ENCODE measurements at regions of chr6 and their contacts with region 1.

Region 1: GRCh38 chr6:42928986-42929820 is at the start of gene CNPY3:
- DNase-seq: peak; percentile 97
- ATAC-seq: peak; percentile 94
- H3K4me3 ChIP-seq: peak within 1 kb of the TSS; percentile 71 to 79 (median 78)
- H3K27ac ChIP-seq: peak within 1 kb of the TSS; percentile 83
- H3K4me1 ChIP-seq: peaks cover 64% of the 10 kb centered on the region
- H3K27me3 ChIP-seq: no peaks in the 10 kb centered on the region; a peak in 1 of 5 replicates
- CTCF ChIP-seq: peak; percentile 46
- EP300 ChIP-seq: peak in 1 of 2 experiments; percentile 8; a peak in 1 of 4 replicates
- POLR2A ChIP-seq: peak; percentile 70 to 74
- RAD21 ChIP-seq: peak; percentile 44
- total RNA-seq, gene CNPY3: 31.4 and 60.2 TPM in 2 replicates

Region 2: DNA sequence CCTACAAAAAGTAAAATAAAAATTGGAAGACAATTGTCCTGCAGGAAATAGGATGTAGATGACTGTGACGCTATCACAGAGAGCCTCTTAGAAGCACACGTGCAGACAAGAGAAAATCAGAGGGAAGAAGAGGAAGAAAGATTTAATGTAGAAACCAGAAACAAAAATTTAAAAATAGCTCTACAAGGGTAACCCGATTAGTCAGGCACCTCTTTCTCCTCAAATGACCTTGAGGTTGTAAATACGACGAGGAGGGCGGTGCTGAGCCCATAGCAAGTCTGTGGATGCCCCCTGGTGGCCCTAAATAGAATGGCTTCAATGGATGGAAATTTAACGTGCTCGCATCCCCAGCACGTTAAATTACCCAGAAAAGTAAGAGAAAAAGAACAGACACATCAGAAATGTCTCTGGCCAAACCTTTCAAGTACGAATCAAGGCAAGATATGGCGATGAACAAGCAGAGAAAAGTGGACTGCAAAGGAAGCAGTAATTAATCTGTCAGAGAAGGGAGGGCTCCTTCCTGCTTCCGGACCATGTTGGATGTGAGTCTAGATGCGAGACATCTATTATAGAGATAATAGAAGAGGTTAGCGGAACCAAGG is 202.6 kb before region 1 on chr6:
- CTCF ChIA-PET with region 1: no interaction called
- POLR2A ChIA-PET with region 1: no interaction called
- in situ Hi-C with region 1: no loop called
- intact Hi-C with region 1: no loop called
- DNase-seq: peak; percentile 84
- ATAC-seq: peak; percentile 82
- H3K4me3 ChIP-seq: no peak overlapping the region
- H3K27ac ChIP-seq: no peak overlapping the region
- H3K4me1 ChIP-seq: peaks cover 20% of the 10 kb centered on the region
- H3K27me3 ChIP-seq: no peaks in the 10 kb centered on the region
- CTCF ChIP-seq: peak; percentile 94
- EP300 ChIP-seq: no peak
- POLR2A ChIP-seq: no peak
- RAD21 ChIP-seq: peak; percentile 90; the same call in 1 of the 2 replicates

Region 3: DNA sequence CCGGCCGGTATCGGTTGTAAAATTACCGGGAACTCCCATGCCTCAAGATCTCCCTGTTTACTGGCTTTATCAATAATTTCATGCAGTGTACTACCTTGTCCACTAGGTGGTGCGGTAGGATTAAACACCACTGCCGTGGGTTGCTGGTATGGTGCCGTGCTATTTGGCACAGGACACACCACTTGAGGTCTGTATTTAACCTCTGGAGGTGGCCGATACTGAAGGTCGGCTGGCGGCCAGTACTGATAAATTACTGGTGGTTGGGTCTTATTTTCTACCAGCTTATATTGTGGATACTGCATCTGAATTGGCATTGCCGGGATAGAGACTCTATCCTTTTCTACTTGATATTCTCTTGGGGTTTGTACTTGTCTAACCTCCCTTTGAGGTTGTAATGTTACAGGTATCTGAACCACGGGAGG is 27.7 kb before region 1 on chr6:
- CTCF ChIA-PET with region 1: no interaction called
- POLR2A ChIA-PET with region 1: interaction called, 16 read pairs
- in situ Hi-C with region 1: no loop called
- intact Hi-C with region 1: no loop called
- DNase-seq: peak; percentile 92
- ATAC-seq: peak; percentile 94
- H3K4me3 ChIP-seq: peak overlapping the region; percentile 48 to 71 (median 63)
- H3K27ac ChIP-seq: no peak overlapping the region
- H3K4me1 ChIP-seq: peaks cover 38% of the 10 kb centered on the region
- H3K27me3 ChIP-seq: no peaks in the 10 kb centered on the region
- CTCF ChIP-seq: peak; percentile 98
- EP300 ChIP-seq: 0 out of 4 replicates have a peak, but pooled peaks of 1 of the 2 experiments have one; percentile 16
- POLR2A ChIP-seq: no peak
- RAD21 ChIP-seq: peak; percentile 96

Region 4: GRCh38 chr6:42963855-42964605 is 34.8 kb after region 1 on chr6:
- CTCF ChIA-PET with region 1: no interaction called
- POLR2A ChIA-PET with region 1: interaction called, 36 read pairs
- in situ Hi-C with region 1: no loop called
- intact Hi-C with region 1: no loop called
- DNase-seq: peak; percentile 76
- ATAC-seq: peak; percentile 44
- H3K4me3 ChIP-seq: no peak overlapping the region
- H3K27ac ChIP-seq: no peak overlapping the region
- H3K4me1 ChIP-seq: peaks cover 35% of the 10 kb centered on the region
- H3K27me3 ChIP-seq: no peaks in the 10 kb centered on the region; a peak in 1 of 5 replicates
- CTCF ChIP-seq: peak; percentile 72
- EP300 ChIP-seq: no peak
- POLR2A ChIP-seq: no peak
- RAD21 ChIP-seq: peak; percentile 62

Region 5: GRCh38 chr6:43013843-43014433 is 84.7 kb after region 1 on chr6 and contains the starts of genes KLHDC3 and MEA1:
- CTCF ChIA-PET with region 1: no interaction called
- POLR2A ChIA-PET with region 1: interaction called, 43 read pairs
- in situ Hi-C with region 1: no loop called
- intact Hi-C with region 1: no loop called
- DNase-seq: peak; percentile 100
- ATAC-seq: peak; percentile 94
- H3K4me3 ChIP-seq: peak within 1 kb of the TSS; percentile 88 to 93 (median 91)
- H3K27ac ChIP-seq: peak within 1 kb of the TSS; percentile 44
- H3K4me1 ChIP-seq: peaks cover 38% of the 10 kb centered on the region
- H3K27me3 ChIP-seq: no peaks in the 10 kb centered on the region; a peak in 1 of 5 replicates
- CTCF ChIP-seq: no peak
- EP300 ChIP-seq: no peak; a peak in 1 of 4 replicates
- POLR2A ChIP-seq: peak in 1 of 2 experiments; percentile 68; a peak in 2 of 4 replicates
- RAD21 ChIP-seq: no peak
- total RNA-seq, gene KLHDC3: 91.5 and 92.5 TPM in 2 replicates
- total RNA-seq, gene MEA1: 86.2 and 110 TPM in 2 replicates

Region 6: DNA sequence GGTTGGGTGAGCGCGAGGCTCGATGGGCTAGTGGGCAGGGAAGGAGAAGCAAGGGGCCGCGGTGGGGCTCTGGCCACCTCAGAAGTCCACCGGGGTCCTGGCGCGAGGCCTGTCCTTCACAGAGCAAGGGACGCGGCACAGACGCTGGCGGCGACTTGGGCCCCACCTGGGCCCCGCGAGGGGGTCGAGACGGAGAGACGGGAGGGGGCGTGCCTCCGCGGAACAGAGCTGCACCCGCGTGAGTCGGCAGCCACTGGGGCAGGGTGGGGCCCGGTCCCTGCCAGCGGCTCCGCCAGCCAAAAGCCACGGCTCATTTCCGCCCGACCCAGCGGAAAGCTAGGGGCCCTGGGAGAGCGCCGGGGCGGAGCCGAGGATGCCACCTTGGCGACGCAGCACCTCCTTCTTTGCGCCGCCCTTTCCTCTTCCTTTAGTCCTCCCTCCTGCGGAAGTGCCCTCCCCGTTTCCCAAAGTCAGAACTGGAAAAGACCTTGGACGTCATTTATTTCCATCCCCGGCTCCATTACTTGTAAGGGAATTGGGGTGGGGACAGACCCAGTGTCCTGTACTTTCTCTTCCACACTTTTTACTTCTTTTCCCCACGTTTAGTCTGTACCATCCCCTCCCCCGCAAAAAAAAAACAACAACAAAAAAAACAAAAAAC is 124.5 kb after region 1 on chr6 and contains the start of gene CUL7:
- CTCF ChIA-PET with region 1: no interaction called
- POLR2A ChIA-PET with region 1: interaction called, 16 read pairs
- in situ Hi-C with region 1: no loop called
- intact Hi-C with region 1: no loop called
- DNase-seq: peak; percentile 91
- ATAC-seq: peak; percentile 95
- H3K4me3 ChIP-seq: peak within 1 kb of the TSS; percentile 75 to 96 (median 94)
- H3K27ac ChIP-seq: peak within 1 kb of the TSS; percentile 84
- H3K4me1 ChIP-seq: peaks cover 49% of the 10 kb centered on the region
- H3K27me3 ChIP-seq: no peaks in the 10 kb centered on the region; a peak in 1 of 5 replicates
- CTCF ChIP-seq: no peak
- EP300 ChIP-seq: 0 out of 4 replicates have a peak, but pooled peaks of 1 of the 2 experiments have one; percentile 2
- POLR2A ChIP-seq: peak in 1 of 2 experiments; percentile 95; a peak in 2 of 4 replicates
- RAD21 ChIP-seq: peak; percentile 74
- total RNA-seq, gene CUL7: 30.7 and 32.0 TPM in 2 replicates

Measured in HepG2 (cell line).